Spleen (tissue), 13 donors: ENCODE measurements at regions of chr15 and their contacts with region 1.

Region 1: GRCh38 chr15:68383161-68384074 is 48.5 kb downstream of the ITGA11 start:
- DNase-seq: no peak
- H3K4me3 ChIP-seq: no peak overlapping the region
- H3K27ac ChIP-seq: no peak overlapping the region
- H3K4me1 ChIP-seq: peaks cover 0 to 7% (median 0%) of the 10 kb centered on the region in 6 donors
- H3K27me3 ChIP-seq: peaks cover 0 to 18% (median 0%) of the 10 kb centered on the region in 7 donors
- CTCF ChIP-seq: peak; percentile 46 to 83 (median 74)
- POLR2A ChIP-seq: no peak

Region 2: GRCh38 chr15:67998599-67999122 is 384.8 kb before region 1 on chr15:
- intact Hi-C with region 1: no loop called
- DNase-seq: no peak
- H3K4me3 ChIP-seq: no peak overlapping the region
- H3K27ac ChIP-seq: no peak overlapping the region
- H3K4me1 ChIP-seq: peaks cover 0 to 3% (median 0%) of the 10 kb centered on the region in 6 donors
- H3K27me3 ChIP-seq: peaks cover 0 to 4% (median 0%) of the 10 kb centered on the region in 7 donors
- CTCF ChIP-seq: no peak
- POLR2A ChIP-seq: no peak

Region 3: DNA sequence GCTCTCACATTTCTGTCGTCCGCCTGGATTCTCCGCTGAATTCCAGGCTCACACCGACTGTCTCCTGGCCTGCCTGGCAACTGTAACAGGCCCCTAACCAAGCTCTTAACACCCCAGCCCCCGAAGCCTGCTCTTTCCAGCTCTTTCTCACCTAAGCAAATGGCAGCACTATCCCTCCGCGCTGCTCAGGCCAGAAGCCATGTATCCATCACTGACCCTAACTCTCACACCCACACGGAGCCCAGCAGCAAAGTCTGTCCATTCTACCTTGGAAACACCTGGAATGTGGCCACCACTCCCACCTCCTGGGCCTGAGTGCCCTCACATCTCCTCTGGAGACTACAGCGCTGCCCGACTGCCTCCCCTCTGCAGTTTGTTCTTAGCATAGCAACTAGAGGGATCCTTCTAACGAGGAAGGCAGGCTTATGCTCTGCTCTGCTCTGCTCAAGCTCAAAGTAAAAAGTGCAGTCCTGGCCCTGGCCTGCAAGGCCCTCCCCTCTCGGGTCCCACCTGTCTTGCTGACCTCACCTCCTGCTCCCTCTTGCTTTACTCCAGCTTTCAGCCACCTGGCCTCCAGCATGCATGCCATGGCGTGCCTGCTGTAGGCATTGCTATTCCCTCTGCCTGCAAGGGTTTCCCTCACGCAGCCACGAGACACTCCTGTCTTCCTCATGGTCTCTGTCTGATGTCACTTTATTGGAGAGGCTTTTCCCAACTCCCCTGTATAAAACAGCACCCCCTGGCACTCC is 78.7 kb before region 1 on chr15:
- intact Hi-C with region 1: loop called (anchors 5 kb)
- DNase-seq: peak; percentile 62
- H3K4me3 ChIP-seq: no peak overlapping the region
- H3K27ac ChIP-seq: no peak overlapping the region
- H3K4me1 ChIP-seq: peaks cover under 1 to 27% (median 13%) of the 10 kb centered on the region in 6 donors
- H3K27me3 ChIP-seq: peaks cover 0 to 6% (median 0%) of the 10 kb centered on the region in 7 donors
- CTCF ChIP-seq: no peak
- POLR2A ChIP-seq: no peak

Region 4: DNA sequence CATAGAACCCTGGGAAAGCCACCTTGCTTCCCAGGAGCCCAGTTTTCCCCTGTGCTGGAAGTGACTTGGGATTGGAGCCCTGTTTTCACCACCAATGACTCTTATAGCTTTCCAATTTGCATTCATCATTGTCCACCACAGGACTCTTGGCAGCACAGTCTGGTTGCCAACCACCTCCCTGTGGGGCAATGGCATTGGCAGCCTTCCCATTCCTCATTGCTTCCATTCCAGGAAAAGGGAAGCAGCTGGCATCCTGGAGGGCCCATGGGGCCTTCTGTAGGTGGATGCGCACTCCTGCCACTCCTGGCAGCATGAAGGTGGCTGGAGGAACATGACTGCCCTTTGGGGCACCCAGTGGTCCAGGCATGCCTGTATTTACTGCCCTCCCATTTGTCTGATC is 48.2 kb before region 1 on chr15:
- intact Hi-C with region 1: no loop called
- DNase-seq: peak; percentile 81
- H3K4me3 ChIP-seq: no peak overlapping the region
- H3K27ac ChIP-seq: peak overlapping the region; percentile 68 to 89 (median 82)
- H3K4me1 ChIP-seq: peaks cover 3 to 41% (median 29%) of the 10 kb centered on the region in 6 donors
- H3K27me3 ChIP-seq: no peaks in the 10 kb centered on the region
- CTCF ChIP-seq: no peak
- POLR2A ChIP-seq: no peak